ENCODE measurements at regions of chr14 and their contacts with region 1.

Region 1: DNA sequence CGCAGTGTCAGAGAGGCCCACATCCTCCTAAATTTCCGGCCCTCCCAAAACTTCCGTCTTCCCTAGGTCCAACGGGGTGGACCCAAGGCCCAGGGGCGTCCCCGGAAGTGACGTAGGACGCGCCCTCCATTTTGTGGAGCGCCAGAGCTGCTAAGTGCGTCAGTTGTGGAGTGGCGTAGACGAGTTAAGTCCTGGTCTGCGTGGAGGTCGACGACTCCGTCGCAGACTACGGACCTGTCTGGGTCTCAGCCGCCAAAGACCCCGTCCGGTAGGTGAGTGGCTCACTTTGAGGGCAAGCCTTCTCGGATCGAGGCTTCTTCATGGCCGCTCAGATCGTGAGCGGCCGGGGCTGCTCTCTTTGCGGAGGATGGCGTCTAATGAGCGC is at the start of gene SRSF5:
- DNase-seq: peak; percentile 93
- H3K4me3 Mint-ChIP-seq: peak within 1 kb of the TSS; percentile 96
- H3K27ac Mint-ChIP-seq: peak within 1 kb of the TSS; percentile 100
- H3K4me1 Mint-ChIP-seq: peaks cover 59% of the 10 kb centered on the region
- H3K27me3 Mint-ChIP-seq: no peaks in the 10 kb centered on the region
- total RNA-seq, gene SRSF5: 316 and 358 TPM in 2 replicates

Region 2: GRCh38 chr14:69398053-69398817 is 368.7 kb before region 1 on chr14 and contains the starts of genes ERH and SLC39A9:
- intact Hi-C with region 1: loop called (anchors 1 kb)
- DNase-seq: peak; percentile 92
- H3K4me3 Mint-ChIP-seq: peak within 1 kb of the TSS; percentile 97
- H3K27ac Mint-ChIP-seq: peak within 1 kb of the TSS; percentile 99
- H3K4me1 Mint-ChIP-seq: peaks cover 50% of the 10 kb centered on the region
- H3K27me3 Mint-ChIP-seq: no peaks in the 10 kb centered on the region
- total RNA-seq, gene ERH: 390 and 410 TPM in 2 replicates
- total RNA-seq, gene SLC39A9: 43.7 and 46.7 TPM in 2 replicates

Region 3: DNA sequence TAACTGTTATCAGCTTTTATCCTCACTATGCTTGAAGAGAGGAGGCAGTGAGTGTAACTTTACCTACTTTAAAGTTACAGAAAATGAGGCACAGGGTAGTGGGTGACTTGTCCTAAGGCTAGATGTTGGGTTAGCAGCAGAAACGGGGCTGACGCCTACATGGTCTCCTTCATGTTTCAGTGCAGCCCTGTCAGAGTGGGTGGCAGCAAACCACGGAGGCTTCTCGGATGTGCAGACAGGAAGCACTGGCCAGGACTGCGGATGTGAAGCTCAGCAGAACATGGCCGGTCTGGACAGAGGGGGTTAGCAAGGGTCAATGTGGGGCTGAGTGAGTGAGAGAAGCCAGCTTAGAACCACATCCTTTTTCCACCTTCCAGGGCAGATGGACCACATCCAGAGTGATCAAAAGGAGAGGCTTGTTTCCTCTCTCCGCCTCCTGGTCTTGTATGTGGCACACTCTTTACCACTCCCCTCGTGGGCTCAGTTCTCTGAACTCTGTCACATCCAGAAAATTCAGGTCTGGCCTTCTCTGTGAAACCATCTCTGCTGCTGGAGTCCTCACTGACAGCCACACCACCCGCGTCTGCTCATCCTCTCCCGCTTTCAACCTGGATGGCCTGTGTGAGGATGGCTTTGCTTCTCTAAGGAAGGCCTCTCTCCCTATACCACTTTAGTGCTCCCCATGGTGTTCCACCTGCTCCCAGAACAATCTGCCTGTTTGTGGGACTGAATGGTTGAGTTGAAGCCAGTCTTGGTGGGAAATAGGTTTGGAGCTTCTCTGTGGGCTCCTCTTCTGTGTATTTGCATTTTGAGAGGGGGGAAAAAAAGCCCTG is 141.5 kb before region 1 on chr14:
- intact Hi-C with region 1: no loop called
- DNase-seq: peak; percentile 72
- H3K4me3 Mint-ChIP-seq: peak overlapping the region; percentile 69
- H3K27ac Mint-ChIP-seq: peak overlapping the region; percentile 89
- H3K4me1 Mint-ChIP-seq: peaks cover 76% of the 10 kb centered on the region
- H3K27me3 Mint-ChIP-seq: no peaks in the 10 kb centered on the region

Region 4: GRCh38 chr14:69673578-69674305 is 93.2 kb before region 1 on chr14:
- intact Hi-C with region 1: loop called (anchors 10 kb)
- DNase-seq: no peak
- H3K4me3 Mint-ChIP-seq: peak overlapping the region; percentile 55
- H3K27ac Mint-ChIP-seq: peak overlapping the region; percentile 97
- H3K4me1 Mint-ChIP-seq: peaks cover 74% of the 10 kb centered on the region
- H3K27me3 Mint-ChIP-seq: no peaks in the 10 kb centered on the region

Region 5: GRCh38 chr14:69726761-69727511 is 40.0 kb before region 1 on chr14:
- intact Hi-C with region 1: loop called (anchors 2 kb)
- DNase-seq: peak; percentile 73
- H3K4me3 Mint-ChIP-seq: peak overlapping the region; percentile 52
- H3K27ac Mint-ChIP-seq: peak overlapping the region; percentile 20
- H3K4me1 Mint-ChIP-seq: peaks cover 24% of the 10 kb centered on the region
- H3K27me3 Mint-ChIP-seq: peaks cover 5% of the 10 kb centered on the region

Region 6: DNA sequence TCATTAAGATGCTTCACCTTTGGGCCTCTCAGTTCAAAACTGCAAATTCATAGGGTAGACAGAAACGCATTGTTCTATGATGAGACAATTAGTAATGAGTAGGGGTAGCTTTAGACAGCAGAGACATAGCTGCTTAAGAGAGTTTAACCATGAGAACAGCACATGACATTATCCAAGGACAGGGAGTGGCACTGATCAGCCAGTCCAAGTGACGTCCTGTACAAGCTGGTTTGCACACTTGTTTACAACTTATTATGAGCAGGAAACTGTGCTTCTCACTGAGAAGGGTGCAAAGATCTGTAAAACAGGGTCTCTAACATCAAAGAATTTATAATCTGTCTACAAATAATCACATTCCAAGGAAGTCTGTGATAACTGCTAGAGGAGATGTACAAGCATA is 11.2 kb before region 1 on chr14:
- intact Hi-C with region 1: no loop called
- DNase-seq: no peak
- H3K4me3 Mint-ChIP-seq: no peak overlapping the region
- H3K27ac Mint-ChIP-seq: no peak overlapping the region
- H3K4me1 Mint-ChIP-seq: peaks cover 13% of the 10 kb centered on the region
- H3K27me3 Mint-ChIP-seq: no peaks in the 10 kb centered on the region

Region 7: GRCh38 chr14:69827560-69827959 is 60.6 kb after region 1 on chr14:
- intact Hi-C with region 1: no loop called
- DNase-seq: no peak
- H3K4me3 Mint-ChIP-seq: no peak overlapping the region
- H3K27ac Mint-ChIP-seq: no peak overlapping the region
- H3K4me1 Mint-ChIP-seq: no peaks in the 10 kb centered on the region
- H3K27me3 Mint-ChIP-seq: peaks cover 11% of the 10 kb centered on the region